Gastrocnemius medialis (tissue), 4 donors: ENCODE measurements at regions of chrX and their contacts with region 1.

Region 1: GRCh38 chrX:71171110-71171801 is 26.6 kb downstream of the NLGN3 start:
- DNase-seq: no peak
- ATAC-seq: no peak
- H3K4me3 ChIP-seq: no peak overlapping the region
- H3K27ac ChIP-seq: no peak overlapping the region
- H3K4me1 ChIP-seq: no peaks in the 10 kb centered on the region
- H3K27me3 ChIP-seq: no peaks in the 10 kb centered on the region
- CTCF ChIP-seq: no peak
- POLR2A ChIP-seq: no peak

Region 2: DNA sequence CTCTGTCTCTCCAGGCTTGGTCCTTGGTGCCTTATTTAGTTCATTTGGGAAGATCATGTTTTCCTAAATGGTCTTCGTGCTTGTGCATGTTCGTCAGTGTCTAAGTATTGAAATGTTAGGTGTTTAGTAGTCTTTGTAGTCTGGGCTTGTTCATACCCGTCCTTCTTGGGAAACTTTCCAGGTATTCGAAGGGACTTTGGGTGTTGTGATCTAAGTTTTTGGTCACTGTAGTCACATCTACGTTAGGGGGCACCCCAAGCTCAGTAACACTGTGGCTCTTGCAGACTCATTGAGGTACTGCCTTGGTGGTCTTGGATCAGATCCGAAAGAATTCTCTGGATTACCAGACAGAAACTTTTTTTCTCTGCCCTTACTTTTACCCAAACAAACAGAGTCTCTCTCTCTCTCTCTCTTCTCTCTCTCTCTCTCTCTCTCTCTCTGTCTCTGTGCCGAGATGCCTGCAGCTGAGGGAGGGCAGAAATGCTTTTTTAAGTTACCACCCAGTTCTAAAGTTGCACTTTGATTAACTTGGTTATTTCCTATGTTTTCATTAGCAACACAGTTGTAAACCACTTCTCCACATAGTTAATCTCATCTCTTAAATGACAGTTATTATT is 172.7 kb before region 1 on chrX:
- in situ Hi-C with region 1: loop called in 1 of 4 experiments (anchors 25 kb)
- intact Hi-C with region 1: no loop called
- DNase-seq: no peak
- ATAC-seq: no peak
- H3K4me3 ChIP-seq: no peak overlapping the region
- H3K27ac ChIP-seq: no peak overlapping the region
- H3K4me1 ChIP-seq: no peaks in the 10 kb centered on the region
- H3K27me3 ChIP-seq: no peaks in the 10 kb centered on the region
- CTCF ChIP-seq: no peak
- POLR2A ChIP-seq: no peak